ENCODE measurements at regions of chr2 and their contacts with region 1.

Region 1: DNA sequence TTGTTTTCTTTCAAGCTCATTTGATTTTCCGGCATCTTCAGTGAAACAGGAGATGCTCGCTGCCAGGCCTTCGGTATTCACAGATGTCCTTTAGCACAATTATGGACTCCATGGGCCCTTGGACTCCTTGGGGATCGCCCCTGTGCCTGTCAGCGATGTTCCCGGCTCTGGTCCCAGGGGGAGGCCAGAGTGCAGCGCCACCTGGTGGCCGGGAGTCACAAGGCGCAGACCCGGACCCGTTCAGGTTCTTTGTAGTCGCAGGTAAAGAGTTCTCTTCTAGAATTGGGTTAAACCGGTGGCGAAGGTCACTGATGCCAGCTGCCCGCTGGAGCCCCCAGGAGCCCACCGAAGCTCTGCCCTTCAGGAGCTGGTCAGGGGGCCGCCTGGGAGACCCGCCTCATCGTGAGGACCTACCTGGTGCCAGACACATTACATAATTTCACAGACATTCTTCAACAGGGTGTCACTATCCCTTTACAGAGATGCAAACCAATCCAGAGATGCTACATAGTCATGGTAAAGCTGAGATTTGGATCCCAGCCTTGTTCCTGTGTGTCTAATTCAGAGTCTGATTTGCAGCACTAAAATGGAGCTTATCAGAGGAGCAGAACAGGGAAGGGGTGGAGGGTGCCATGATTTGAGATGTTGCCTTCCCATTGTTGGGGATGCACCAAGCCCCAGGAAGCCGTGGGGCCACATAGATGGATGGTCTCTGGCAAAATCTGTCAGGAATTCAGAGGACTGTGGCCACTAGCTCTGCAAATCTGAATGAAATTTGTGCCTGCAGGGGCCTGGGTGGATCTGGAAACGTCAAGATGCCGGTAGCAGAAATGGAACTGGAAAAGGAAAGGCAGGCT is 6.0 kb upstream of the INPP5D start:
- DNase-seq: peak in 7 of 9 donors; percentile 43 to 79 (median 57)
- ATAC-seq: peak; percentile 80
- H3K4me3 ChIP-seq: no peak overlapping the region
- H3K4me3 Mint-ChIP-seq: peak overlapping the region in 3 of 10 donors; percentile 10 to 56 (median 15)
- H3K27ac ChIP-seq: no peak overlapping the region
- H3K27ac Mint-ChIP-seq: peak overlapping the region in 2 of 9 donors; percentile 27 to 57
- H3K4me1 ChIP-seq: peaks cover 8 to 13% of the 10 kb centered on the region in 2 donors
- H3K4me1 Mint-ChIP-seq: peaks cover 8 to 28% (median 19%) of the 10 kb centered on the region in 7 donors
- H3K27me3 ChIP-seq: no peaks in the 10 kb centered on the region
- H3K27me3 Mint-ChIP-seq: peaks cover 0 to 35% (median 0%) of the 10 kb centered on the region in 5 donors

Region 2: DNA sequence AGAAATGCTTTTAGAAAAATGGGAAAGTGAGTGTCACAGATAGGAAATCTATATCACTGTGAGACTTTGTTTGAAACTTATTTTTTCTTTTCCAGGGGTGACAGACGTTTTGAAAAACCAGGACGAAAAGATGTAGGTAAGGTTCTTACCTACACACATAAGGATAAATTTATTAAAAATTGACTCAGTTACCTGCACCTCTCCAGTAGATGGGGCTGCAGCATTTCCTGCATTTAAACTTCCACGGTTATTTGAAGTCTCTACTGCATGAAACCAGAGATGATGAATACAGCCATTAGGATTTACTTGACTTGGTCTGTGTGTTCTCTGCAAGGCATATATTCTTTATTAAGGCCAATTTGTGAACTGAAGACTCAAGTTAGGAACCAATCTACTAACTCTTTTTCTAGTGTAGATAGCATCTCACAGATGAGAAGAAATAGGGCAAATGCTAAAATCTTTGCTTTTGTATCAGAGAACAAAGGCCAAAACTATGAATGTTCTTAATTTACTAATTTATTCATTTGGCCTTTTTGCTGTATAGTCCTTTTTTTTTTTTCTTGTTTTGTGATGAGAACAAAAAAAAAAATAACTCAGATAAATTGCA is 292.8 kb before region 1 on chr2:
- CTCF ChIA-PET with region 1: no interaction called
- POLR2A ChIA-PET with region 1: no interaction called
- intact Hi-C with region 1: loop called (anchors 1 to 5 kb)
- DNase-seq: peak in 7 of 9 donors; percentile 11 to 53 (median 36)
- ATAC-seq: peak; percentile 66
- H3K4me3 ChIP-seq: no peak overlapping the region
- H3K4me3 Mint-ChIP-seq: no peak overlapping the region
- H3K27ac ChIP-seq: no peak overlapping the region
- H3K27ac Mint-ChIP-seq: no peak overlapping the region
- H3K4me1 ChIP-seq: peaks cover 0 to 11% of the 10 kb centered on the region in 2 donors
- H3K4me1 Mint-ChIP-seq: peaks cover 5 to 32% (median 17%) of the 10 kb centered on the region in 7 donors
- H3K27me3 ChIP-seq: no peaks in the 10 kb centered on the region
- H3K27me3 Mint-ChIP-seq: no peaks in the 10 kb centered on the region

Region 3: GRCh38 chr2:232854082-232854481 is 200.1 kb before region 1 on chr2:
- CTCF ChIA-PET with region 1: no interaction called
- POLR2A ChIA-PET with region 1: interaction called, 3 read pairs
- intact Hi-C with region 1: loop called in 1 of 2 experiments (anchors 1 kb)
- DNase-seq: no peak
- ATAC-seq: no peak
- H3K4me3 ChIP-seq: no peak overlapping the region
- H3K4me3 Mint-ChIP-seq: no peak overlapping the region
- H3K27ac ChIP-seq: no peak overlapping the region
- H3K27ac Mint-ChIP-seq: no peak overlapping the region
- H3K4me1 ChIP-seq: no peaks in the 10 kb centered on the region
- H3K4me1 Mint-ChIP-seq: peaks cover 0 to 5% (median 0%) of the 10 kb centered on the region in 7 donors
- H3K27me3 ChIP-seq: no peaks in the 10 kb centered on the region
- H3K27me3 Mint-ChIP-seq: no peaks in the 10 kb centered on the region

Region 4: GRCh38 chr2:233100192-233100998 is 46.2 kb after region 1 on chr2:
- CTCF ChIA-PET with region 1: interaction called, 10 read pairs
- POLR2A ChIA-PET with region 1: interaction called, 9 read pairs
- intact Hi-C with region 1: no loop called
- DNase-seq: peak in 7 of 9 donors; percentile 32 to 57 (median 45)
- ATAC-seq: peak; percentile 73
- H3K4me3 ChIP-seq: peak overlapping the region; percentile 15
- H3K4me3 Mint-ChIP-seq: peak overlapping the region; percentile 59 to 83 (median 72)
- H3K27ac ChIP-seq: no peak overlapping the region
- H3K27ac Mint-ChIP-seq: peak overlapping the region; percentile 12 to 88 (median 76)
- H3K4me1 ChIP-seq: peaks cover 31 to 48% of the 10 kb centered on the region in 2 donors
- H3K4me1 Mint-ChIP-seq: peaks cover 55 to 86% (median 78%) of the 10 kb centered on the region in 7 donors
- H3K27me3 ChIP-seq: no peaks in the 10 kb centered on the region
- H3K27me3 Mint-ChIP-seq: no peaks in the 10 kb centered on the region

Measured in naive thymus-derived CD4-positive, alpha-beta T cell (primary cell).